Mucosa of descending colon (tissue), 3 donors: ENCODE measurements at regions of chr12 and their contacts with region 1.

Region 1: GRCh38 chr12:82527165-82527780 is 159.4 kb upstream of the TMTC2 start:
- DNase-seq: peak in 1 of 3 donors; percentile 69
- ATAC-seq: peak; percentile 62
- H3K4me3 ChIP-seq: no peak overlapping the region
- H3K4me1 ChIP-seq: peaks cover 3% of the 10 kb centered on the region
- CTCF ChIP-seq: peak; percentile 58

Region 2: GRCh38 chr12:82627569-82628198 is 100.4 kb after region 1 on chr12:
- intact Hi-C with region 1: loop called in 1 of 2 experiments (anchors 5 kb)
- DNase-seq: no peak
- ATAC-seq: peak; percentile 53
- H3K4me3 ChIP-seq: no peak overlapping the region
- H3K4me1 ChIP-seq: no peaks in the 10 kb centered on the region
- CTCF ChIP-seq: no peak

Region 3: DNA sequence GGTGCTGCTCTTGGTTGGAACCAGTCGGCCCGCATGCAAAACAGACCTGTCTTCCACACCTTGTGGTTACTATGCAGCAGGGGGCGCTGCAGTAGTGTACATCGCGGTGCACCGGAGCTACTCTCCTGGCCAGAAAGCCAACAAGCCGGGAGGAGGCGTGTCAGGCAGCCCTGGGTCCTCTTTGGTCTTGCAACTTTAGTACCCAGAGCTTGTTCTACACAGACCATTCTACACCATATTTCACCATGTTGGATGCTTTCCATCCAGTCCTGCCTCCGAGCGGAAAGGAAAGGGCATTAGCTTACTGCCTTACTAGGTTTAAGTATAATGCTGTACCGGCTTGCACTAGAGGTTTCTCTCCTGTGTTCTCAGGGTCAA is 158.5 kb after region 1 on chr12:
- intact Hi-C with region 1: loop called in 1 of 2 experiments (anchors 10 kb)
- DNase-seq: peak; percentile 96 to 99 (median 97)
- ATAC-seq: peak; percentile 82
- H3K4me3 ChIP-seq: peak overlapping the region; percentile 86
- H3K4me1 ChIP-seq: peaks cover 11% of the 10 kb centered on the region
- CTCF ChIP-seq: peak; percentile 87